ENCODE measurements at regions of chr18 and their contacts with region 1.

Region 1: DNA sequence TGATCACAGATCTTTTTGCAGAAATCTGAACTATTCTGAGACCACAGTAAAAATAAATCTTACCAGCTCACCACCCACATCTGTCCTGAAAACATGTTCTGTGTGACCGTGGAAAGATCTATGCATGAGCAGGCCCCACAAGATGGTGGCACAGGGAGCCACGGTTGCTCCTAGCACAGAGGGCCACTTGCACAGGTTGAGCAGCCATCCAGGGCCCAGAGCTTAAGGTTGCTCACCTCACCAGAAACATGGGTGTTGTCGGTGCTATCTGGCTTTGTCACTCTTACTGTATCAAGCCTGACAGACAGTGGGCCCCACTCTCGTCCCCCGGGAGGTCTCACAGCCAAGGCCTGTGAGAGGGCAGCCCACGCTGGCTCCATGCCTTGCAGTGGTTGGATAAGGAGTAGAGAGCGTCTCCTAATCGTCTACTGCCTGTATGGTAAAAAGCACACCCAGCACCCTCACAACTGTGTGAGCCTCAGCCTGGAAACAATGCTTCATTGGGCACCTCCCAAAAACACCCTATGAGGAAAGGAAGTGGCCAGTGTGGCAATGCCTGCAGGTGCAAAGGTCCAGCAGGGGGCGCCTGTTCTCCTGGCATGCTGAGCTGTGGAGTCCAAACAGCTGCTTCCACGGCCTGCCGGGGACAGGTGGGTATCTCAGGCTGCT is 19.6 kb downstream of the TUBB6 start:
- DNase-seq: peak; percentile 70 to 97
- H3K4me3 ChIP-seq: no peak overlapping the region
- H3K27ac ChIP-seq: no peak overlapping the region
- H3K4me1 ChIP-seq: peaks cover 0 to 4% (median 2%) of the 10 kb centered on the region in 4 experiments; a peak in 2 of 7 replicates
- H3K27me3 ChIP-seq: no peaks in the 10 kb centered on the region
- CTCF ChIP-seq: peak; percentile 95 to 99 (median 99)
- EP300 ChIP-seq: 0 out of 3 replicates have a peak, but pooled peaks of 1 of the 2 experiments have one; percentile 15
- POLR2A ChIP-seq: 0 out of 3 replicates have a peak, but pooled peaks of 1 of the 2 experiments have one; percentile 17
- RAD21 ChIP-seq: peak; percentile 80 to 89

Region 2: DNA sequence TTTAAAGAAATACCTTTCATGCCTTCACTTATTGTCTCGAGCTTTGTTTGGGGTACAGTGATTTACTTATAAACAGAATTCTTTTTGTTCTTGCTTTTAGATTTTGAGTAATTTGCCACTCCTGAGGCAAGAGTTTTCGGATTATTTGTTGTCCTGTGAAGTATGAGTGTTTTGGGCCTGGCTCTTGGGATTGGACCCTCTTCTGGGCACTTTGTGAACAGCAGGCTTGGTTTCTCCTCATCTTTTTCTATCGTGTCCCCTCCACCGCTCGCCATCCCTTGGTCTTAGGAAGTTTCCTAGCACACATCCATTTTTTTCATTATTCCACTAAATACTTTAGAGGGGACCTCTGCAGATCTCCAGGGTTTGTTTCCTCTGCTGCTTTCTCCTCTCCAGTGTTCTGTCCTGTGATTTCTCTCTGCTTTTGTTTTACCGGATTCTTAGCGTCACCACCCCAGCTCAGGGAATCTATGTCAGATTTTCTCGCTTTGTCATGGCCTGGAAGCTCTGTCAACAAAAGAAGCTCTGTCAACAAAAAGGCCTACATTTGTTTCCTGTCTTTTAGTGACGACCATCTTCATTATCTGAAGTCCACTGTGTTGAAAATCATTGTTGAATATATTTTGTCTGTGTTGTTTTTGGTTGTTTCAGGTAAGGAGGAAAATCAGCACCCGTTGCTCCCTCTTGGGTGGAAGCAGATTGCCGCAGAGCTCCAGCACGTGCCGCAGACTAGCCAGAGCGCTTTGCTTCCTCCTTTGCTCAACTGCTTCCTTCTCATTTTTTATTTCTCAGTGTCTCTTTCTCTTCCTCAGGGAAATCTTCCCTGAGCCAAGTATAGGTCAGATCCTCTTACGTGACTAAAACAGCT is 206.2 kb before region 1 on chr18:
- CTCF ChIA-PET with region 1: no interaction called
- POLR2A ChIA-PET with region 1: no interaction called
- DNase-seq: peak in 1 of 2 experiments; percentile 69
- H3K4me3 ChIP-seq: peak overlapping the region in 2 of 4 experiments; percentile 15 to 45; a peak in 3 of 8 replicates
- H3K27ac ChIP-seq: no peak overlapping the region
- H3K4me1 ChIP-seq: no peaks in the 10 kb centered on the region
- H3K27me3 ChIP-seq: no peaks in the 10 kb centered on the region
- CTCF ChIP-seq: peak; percentile 21 to 54 (median 43)
- EP300 ChIP-seq: no peak
- POLR2A ChIP-seq: no peak
- RAD21 ChIP-seq: peak; percentile 34 to 43; a peak in 3 of 4 replicates

Region 3: GRCh38 chr18:12242658-12243260 is 84.9 kb before region 1 on chr18:
- CTCF ChIA-PET with region 1: no interaction called
- POLR2A ChIA-PET with region 1: no interaction called
- DNase-seq: no peak
- H3K4me3 ChIP-seq: no peak overlapping the region
- H3K27ac ChIP-seq: no peak overlapping the region
- H3K4me1 ChIP-seq: peaks cover 0 to 2% (median 0%) of the 10 kb centered on the region in 4 experiments; a peak in 2 of 7 replicates
- H3K27me3 ChIP-seq: peaks cover 0 to 13% (median 6%) of the 10 kb centered on the region in 4 experiments; a peak in 4 of 7 replicates
- CTCF ChIP-seq: no peak
- EP300 ChIP-seq: no peak
- POLR2A ChIP-seq: no peak
- RAD21 ChIP-seq: no peak

Region 4: GRCh38 chr18:12278741-12279682 is 48.6 kb before region 1 on chr18:
- CTCF ChIA-PET with region 1: interaction called, 35 read pairs
- POLR2A ChIA-PET with region 1: interaction called, 8 read pairs
- DNase-seq: peak; percentile 78
- H3K4me3 ChIP-seq: peak overlapping the region in 2 of 4 experiments; percentile 2 to 14; a peak in 2 of 8 replicates
- H3K27ac ChIP-seq: peak overlapping the region; percentile 37; the same call in 1 of the 2 replicates
- H3K4me1 ChIP-seq: peaks cover 0 to 10% (median 7%) of the 10 kb centered on the region in 4 experiments; a peak in 6 of 7 replicates
- H3K27me3 ChIP-seq: no peaks in the 10 kb centered on the region
- CTCF ChIP-seq: no peak
- EP300 ChIP-seq: no peak
- POLR2A ChIP-seq: peak in 1 of 2 experiments; percentile 71; a peak in 2 of 3 replicates
- RAD21 ChIP-seq: no peak

Region 5: GRCh38 chr18:12287684-12288402 is 39.8 kb before region 1 on chr18:
- CTCF ChIA-PET with region 1: interaction called, 20 read pairs
- POLR2A ChIA-PET with region 1: interaction called, 9 read pairs
- DNase-seq: peak in 1 of 2 experiments; percentile 85
- H3K4me3 ChIP-seq: peak overlapping the region; percentile 31 to 63 (median 54)
- H3K27ac ChIP-seq: no peak overlapping the region
- H3K4me1 ChIP-seq: peaks cover 0 to 10% (median 6%) of the 10 kb centered on the region in 4 experiments; a peak in 5 of 7 replicates
- H3K27me3 ChIP-seq: peaks cover 2 to 29% (median 20%) of the 10 kb centered on the region in 4 experiments; a peak in 6 of 7 replicates
- CTCF ChIP-seq: no peak
- EP300 ChIP-seq: no peak
- POLR2A ChIP-seq: no peak
- RAD21 ChIP-seq: no peak

Region 6: GRCh38 chr18:12345491-12346239 is 18.0 kb after region 1 on chr18:
- CTCF ChIA-PET with region 1: interaction called, 27 read pairs
- POLR2A ChIA-PET with region 1: interaction called, 3 read pairs
- DNase-seq: no peak
- H3K4me3 ChIP-seq: no peak overlapping the region
- H3K27ac ChIP-seq: no peak overlapping the region; the same call in 1 of the 2 replicates
- H3K4me1 ChIP-seq: no peaks in the 10 kb centered on the region
- H3K27me3 ChIP-seq: no peaks in the 10 kb centered on the region
- CTCF ChIP-seq: no peak
- EP300 ChIP-seq: no peak
- POLR2A ChIP-seq: no peak
- RAD21 ChIP-seq: no peak

Region 7: DNA sequence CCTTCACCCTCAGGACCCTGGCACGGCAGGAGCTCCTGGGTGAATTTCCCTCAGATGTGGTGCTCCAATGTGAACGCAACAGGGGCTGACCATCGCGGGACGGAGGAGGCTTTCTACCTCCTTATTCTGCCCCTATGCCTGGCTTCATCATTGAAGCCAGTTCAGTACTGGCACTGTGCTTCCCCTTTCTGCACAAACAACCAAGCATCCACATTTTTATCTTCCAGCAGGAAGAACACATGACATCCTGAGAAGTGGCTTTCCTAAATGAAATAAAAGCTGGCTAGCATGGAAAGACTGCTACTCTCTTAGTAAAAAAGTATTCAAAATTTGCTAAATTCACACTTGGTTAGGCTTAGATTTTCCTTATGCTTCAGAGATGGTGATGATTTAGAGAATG is 24.5 kb after region 1 on chr18:
- CTCF ChIA-PET with region 1: interaction called, 27 read pairs
- POLR2A ChIA-PET with region 1: interaction called, 3 read pairs
- DNase-seq: no peak
- H3K4me3 ChIP-seq: no peak overlapping the region
- H3K27ac ChIP-seq: no peak overlapping the region
- H3K4me1 ChIP-seq: no peaks in the 10 kb centered on the region
- H3K27me3 ChIP-seq: no peaks in the 10 kb centered on the region
- CTCF ChIP-seq: no peak
- EP300 ChIP-seq: no peak
- POLR2A ChIP-seq: no peak
- RAD21 ChIP-seq: no peak

Region 8: DNA sequence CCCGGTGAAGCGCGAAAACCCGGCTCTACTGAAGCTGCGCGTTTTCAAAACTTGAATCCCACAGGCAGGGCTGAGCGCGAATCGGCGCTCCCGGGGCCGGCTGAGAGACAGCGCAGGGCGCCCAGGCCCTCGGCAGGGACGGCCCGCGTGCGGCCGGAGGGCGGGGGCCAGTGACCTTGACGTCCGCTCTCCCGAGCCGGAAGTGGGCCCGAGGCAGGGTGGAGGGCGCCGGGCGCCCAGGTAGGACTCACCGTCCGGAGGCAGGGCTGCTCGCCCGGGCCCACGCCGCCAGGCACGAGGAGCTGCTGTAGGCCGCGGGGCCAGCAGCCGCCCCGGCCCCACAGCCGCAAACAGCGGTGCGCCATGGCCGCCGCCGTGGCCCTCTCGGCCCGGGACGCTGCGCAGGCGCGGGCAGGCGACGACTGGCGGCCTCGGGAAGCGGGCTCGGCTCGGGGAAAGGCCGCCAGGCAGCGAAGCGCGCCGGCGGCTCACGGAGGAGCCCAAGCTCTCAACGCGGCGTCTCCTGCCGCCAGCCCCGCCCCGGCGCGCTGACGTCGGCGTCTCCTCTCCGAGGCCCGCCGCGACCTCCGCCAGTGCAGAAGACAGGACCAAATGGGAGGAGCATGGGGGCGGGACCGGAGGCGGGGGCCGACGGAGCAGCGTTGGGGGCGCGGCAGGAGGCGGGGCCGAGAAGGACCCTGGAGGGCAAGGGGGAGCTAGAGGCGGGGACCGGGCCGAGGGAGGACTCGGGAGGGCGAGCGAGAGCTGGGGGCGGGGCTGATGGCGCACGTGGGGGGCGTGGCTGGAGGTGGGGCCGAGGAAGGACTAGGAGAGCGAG is 49.3 kb after region 1 on chr18 and contains the start of gene AFG3L2:
- CTCF ChIA-PET with region 1: interaction called, 5 read pairs
- POLR2A ChIA-PET with region 1: interaction called, 10 read pairs
- DNase-seq: peak; percentile 99 to 100
- H3K4me3 ChIP-seq: peak within 1 kb of the TSS; percentile 65 to 89 (median 78)
- H3K27ac ChIP-seq: peak within 1 kb of the TSS; percentile 90
- H3K4me1 ChIP-seq: peaks cover 3 to 15% (median 7%) of the 10 kb centered on the region in 4 experiments
- H3K27me3 ChIP-seq: no peaks in the 10 kb centered on the region
- CTCF ChIP-seq: no peak
- EP300 ChIP-seq: no peak
- POLR2A ChIP-seq: peak; percentile 73 to 79
- RAD21 ChIP-seq: no peak
- total RNA-seq, gene AFG3L2: 81.7 and 84.8 TPM in 2 replicates

Region 9: DNA sequence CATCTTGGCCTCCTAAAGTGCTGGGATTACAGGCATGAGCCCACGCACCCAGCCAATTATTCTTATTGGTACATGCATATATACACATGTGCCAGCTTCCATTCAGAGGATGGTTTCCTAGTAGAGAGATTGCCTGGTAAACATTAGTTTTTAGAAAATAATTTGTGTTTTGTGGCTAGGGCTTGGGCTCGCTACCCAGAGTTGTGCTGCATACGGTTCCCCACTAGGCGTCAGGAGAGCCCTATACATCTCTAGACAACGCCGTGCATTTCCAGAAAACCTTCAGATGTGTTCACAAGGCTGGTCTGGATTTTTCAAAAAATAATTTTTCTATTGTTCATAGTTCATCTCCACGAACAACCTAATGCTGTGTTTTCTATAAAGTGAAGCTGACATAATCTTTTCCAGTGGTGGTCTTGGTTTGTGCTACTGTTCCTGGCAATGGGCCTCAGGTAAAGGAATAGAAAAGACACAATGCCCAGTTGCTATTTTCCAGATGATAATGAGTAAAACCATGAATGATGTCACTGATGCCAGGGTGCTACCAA is 64.0 kb after region 1 on chr18:
- CTCF ChIA-PET with region 1: interaction called, 16 read pairs
- POLR2A ChIA-PET with region 1: no interaction called
- DNase-seq: no peak
- H3K4me3 ChIP-seq: no peak overlapping the region
- H3K27ac ChIP-seq: no peak overlapping the region
- H3K4me1 ChIP-seq: no peaks in the 10 kb centered on the region; a peak in 1 of 7 replicates
- H3K27me3 ChIP-seq: no peaks in the 10 kb centered on the region
- CTCF ChIP-seq: peak; percentile 73 to 88 (median 79)
- EP300 ChIP-seq: no peak
- POLR2A ChIP-seq: no peak
- RAD21 ChIP-seq: peak; percentile 94 to 97

Region 10: GRCh38 chr18:12552884-12553242 is 225.2 kb after region 1 on chr18:
- CTCF ChIA-PET with region 1: no interaction called
- POLR2A ChIA-PET with region 1: no interaction called
- DNase-seq: no peak
- H3K4me3 ChIP-seq: no peak overlapping the region
- H3K27ac ChIP-seq: no peak overlapping the region
- H3K4me1 ChIP-seq: peaks cover 0 to 3% (median 1%) of the 10 kb centered on the region in 4 experiments; a peak in 3 of 7 replicates
- H3K27me3 ChIP-seq: no peaks in the 10 kb centered on the region
- CTCF ChIP-seq: no peak
- EP300 ChIP-seq: no peak
- POLR2A ChIP-seq: no peak
- RAD21 ChIP-seq: no peak